ENCODE measurements at regions of chr19 and their contacts with region 1.

Region 1: DNA sequence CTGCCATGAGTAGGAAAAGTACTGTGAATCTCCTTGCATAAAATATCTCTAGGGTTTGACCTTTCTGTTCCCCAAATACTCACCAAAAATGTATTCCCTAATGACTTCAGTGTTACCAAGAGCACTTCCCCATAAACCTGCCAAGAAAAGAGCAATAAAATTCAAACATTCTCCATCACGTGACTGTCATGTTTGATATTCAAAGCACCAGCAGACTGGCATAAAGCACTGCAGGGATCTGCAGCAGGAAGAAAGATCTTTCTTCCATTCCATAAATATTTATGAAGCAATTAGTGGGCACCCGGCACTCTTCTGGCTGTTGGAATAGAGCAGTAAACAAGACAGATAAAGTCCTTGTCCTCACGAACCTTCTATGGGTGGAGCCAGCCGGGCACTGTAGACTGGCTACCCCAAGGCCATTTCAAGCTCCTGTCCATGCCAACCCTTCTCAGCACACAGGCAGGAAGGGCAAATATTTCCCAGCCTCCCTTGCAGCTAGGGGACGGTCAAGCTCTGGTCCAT is 20.3 kb downstream of the PLA2G4C start:
- DNase-seq: peak; percentile 56
- H3K4me3 ChIP-seq: no peak overlapping the region
- H3K27me3 ChIP-seq: peaks cover 1% of the 10 kb centered on the region
- CTCF ChIP-seq: no peak

Region 2: GRCh38 chr19:48033604-48034003 is 56.7 kb before region 1 on chr19:
- CTCF ChIA-PET with region 1: no interaction called
- POLR2A ChIA-PET with region 1: no interaction called
- DNase-seq: no peak
- H3K4me3 ChIP-seq: no peak overlapping the region
- H3K27me3 ChIP-seq: peaks cover 2% of the 10 kb centered on the region
- CTCF ChIP-seq: no peak

Region 3: GRCh38 chr19:48102870-48103751 is 12.8 kb after region 1 on chr19:
- CTCF ChIA-PET with region 1: interaction called, 12 read pairs
- POLR2A ChIA-PET with region 1: interaction called, 6 read pairs
- DNase-seq: no peak
- H3K4me3 ChIP-seq: no peak overlapping the region
- H3K27me3 ChIP-seq: no peaks in the 10 kb centered on the region
- CTCF ChIP-seq: peak; percentile 80